Mucosa of descending colon (tissue), 3 donors: ENCODE measurements at regions of chr20 and their contacts with region 1.

Region 1: DNA sequence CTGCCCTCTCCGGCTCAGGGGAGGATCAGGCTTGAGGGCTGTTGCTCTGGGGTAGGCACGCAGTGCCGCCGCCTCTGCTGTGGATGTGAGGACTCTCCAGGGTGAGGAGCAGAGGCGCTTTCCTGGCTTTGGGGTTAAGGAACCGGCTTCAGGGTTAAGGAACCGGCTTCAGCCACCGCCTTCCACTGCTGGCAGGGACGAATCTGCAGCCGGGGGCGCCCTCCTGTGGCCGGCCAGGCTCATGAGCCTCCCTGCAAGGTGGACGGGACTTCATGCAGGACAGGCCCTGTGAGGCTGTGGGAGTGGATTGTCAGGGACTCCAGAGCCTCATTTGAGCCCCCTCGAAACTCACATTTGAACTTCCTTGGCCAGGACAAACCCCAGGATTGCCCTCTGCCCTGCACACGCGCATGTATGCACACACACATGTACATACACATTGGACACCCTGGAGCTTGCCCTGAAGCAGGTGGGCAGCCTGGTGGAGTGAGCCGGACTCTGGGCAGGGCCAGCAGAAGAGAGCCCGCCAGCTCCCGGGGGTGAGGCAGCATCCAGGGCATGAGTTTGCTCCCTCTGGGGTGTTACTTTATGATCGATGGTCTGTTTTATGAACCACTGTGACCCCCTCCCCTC is 146.8 kb downstream of the PHACTR3 start:
- DNase-seq: peak; percentile 68 to 80 (median 73)
- ATAC-seq: peak; percentile 80
- H3K4me3 ChIP-seq: no peak overlapping the region
- H3K4me1 ChIP-seq: no peaks in the 10 kb centered on the region
- CTCF ChIP-seq: peak; percentile 65

Region 2: GRCh38 chr20:59560588-59561227 is 190.5 kb before region 1 on chr20:
- intact Hi-C with region 1: loop called in 1 of 2 experiments (anchors 10 kb)
- DNase-seq: peak in 1 of 3 donors; percentile 38
- ATAC-seq: no peak
- H3K4me3 ChIP-seq: no peak overlapping the region
- H3K4me1 ChIP-seq: no peaks in the 10 kb centered on the region
- CTCF ChIP-seq: no peak

Region 3: GRCh38 chr20:59598625-59599310 is 152.4 kb before region 1 on chr20:
- intact Hi-C with region 1: loop called in 1 of 2 experiments (anchors 10 kb)
- DNase-seq: no peak
- ATAC-seq: peak; percentile 54
- H3K4me3 ChIP-seq: no peak overlapping the region
- H3K4me1 ChIP-seq: no peaks in the 10 kb centered on the region
- CTCF ChIP-seq: peak; percentile 64